ENCODE measurements at regions of chr2 and their contacts with region 1.

Region 1: DNA sequence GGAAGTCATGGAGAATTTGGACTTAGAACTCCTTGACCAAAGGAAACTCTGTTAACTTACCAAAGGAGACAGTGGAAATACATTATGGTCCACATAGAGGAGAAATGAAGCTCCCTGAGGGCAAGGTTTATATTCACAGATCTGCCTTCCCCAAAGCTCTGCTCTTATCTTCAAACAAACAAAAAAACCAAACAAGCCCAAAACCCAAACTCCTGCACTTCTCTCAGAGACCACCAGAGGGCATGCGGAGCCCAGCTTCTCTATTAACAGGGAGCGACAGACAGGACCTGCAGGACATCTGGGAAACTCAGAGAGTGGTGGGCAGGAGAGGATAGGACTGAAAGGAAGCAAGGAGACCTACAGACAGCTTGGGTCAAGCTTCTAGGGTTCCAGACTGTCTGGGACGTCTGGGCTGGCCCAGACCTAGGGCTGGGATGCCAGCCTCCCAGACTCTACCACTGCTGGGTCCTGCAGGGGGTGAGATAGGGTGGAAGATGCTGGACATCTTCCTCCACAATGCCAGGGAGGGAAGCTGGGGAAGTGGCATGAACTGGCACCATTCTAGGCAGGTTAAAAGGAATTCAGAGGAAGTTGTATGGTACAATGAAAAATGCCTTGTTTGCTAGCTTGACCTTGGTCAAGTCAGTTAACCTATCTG is 4.0 kb upstream of the WNT10A start:
- DNase-seq: peak; percentile 67
- H3K4me3 Mint-ChIP-seq: no peak overlapping the region
- H3K27ac Mint-ChIP-seq: no peak overlapping the region
- H3K4me1 Mint-ChIP-seq: peaks cover 23% of the 10 kb centered on the region
- H3K27me3 Mint-ChIP-seq: peaks cover 72% of the 10 kb centered on the region

Region 2: DNA sequence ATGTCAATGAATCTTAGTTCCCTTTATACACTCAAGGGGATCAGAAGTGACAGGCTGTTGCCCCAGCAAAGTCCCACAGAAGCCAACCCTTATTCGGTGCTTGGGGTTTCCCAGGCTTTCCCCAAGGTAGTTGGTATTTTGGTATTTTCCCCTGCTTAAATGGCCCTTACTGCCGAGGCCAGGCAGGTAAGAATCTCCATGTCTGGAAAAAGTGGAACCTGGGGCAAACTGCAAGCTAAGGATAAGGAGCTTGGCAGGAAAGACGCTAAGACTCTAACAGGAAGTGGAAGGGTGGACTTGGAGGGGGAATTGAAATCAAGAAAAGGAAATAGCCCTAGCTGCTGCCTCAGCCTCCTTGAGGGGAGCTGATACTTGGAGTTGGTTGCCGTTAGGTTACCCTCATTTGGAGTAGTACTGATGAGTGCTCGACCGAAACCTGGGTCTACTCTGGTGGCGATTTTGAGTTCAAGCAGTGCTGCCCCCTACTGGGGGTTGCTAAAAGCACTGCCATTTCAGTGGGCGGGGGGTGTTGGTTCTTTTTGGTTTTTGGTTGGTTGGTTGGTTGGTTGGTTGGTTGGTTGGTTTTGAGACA is 619.2 kb before region 1 on chr2:
- CTCF ChIA-PET with region 1: no interaction called
- POLR2A ChIA-PET with region 1: no interaction called
- DNase-seq: peak; percentile 67
- H3K4me3 Mint-ChIP-seq: no peak overlapping the region
- H3K27ac Mint-ChIP-seq: peak overlapping the region; percentile 80
- H3K4me1 Mint-ChIP-seq: peaks cover 21% of the 10 kb centered on the region
- H3K27me3 Mint-ChIP-seq: no peaks in the 10 kb centered on the region

Region 3: GRCh38 chr2:218859556-218859987 is 17.1 kb before region 1 on chr2 and contains the start of gene WNT6:
- CTCF ChIA-PET with region 1: interaction called, 11 read pairs
- POLR2A ChIA-PET with region 1: no interaction called
- DNase-seq: no peak
- H3K4me3 Mint-ChIP-seq: peak within 1 kb of the TSS; percentile 32
- H3K27ac Mint-ChIP-seq: no peak within 1 kb of the TSS
- H3K4me1 Mint-ChIP-seq: peaks cover 12% of the 10 kb centered on the region
- H3K27me3 Mint-ChIP-seq: peaks cover 85% of the 10 kb centered on the region
- total RNA-seq, gene WNT6: not detected